K562 (cell line): ENCODE measurements at regions of chr7 and their contacts with region 1.

Region 1: DNA sequence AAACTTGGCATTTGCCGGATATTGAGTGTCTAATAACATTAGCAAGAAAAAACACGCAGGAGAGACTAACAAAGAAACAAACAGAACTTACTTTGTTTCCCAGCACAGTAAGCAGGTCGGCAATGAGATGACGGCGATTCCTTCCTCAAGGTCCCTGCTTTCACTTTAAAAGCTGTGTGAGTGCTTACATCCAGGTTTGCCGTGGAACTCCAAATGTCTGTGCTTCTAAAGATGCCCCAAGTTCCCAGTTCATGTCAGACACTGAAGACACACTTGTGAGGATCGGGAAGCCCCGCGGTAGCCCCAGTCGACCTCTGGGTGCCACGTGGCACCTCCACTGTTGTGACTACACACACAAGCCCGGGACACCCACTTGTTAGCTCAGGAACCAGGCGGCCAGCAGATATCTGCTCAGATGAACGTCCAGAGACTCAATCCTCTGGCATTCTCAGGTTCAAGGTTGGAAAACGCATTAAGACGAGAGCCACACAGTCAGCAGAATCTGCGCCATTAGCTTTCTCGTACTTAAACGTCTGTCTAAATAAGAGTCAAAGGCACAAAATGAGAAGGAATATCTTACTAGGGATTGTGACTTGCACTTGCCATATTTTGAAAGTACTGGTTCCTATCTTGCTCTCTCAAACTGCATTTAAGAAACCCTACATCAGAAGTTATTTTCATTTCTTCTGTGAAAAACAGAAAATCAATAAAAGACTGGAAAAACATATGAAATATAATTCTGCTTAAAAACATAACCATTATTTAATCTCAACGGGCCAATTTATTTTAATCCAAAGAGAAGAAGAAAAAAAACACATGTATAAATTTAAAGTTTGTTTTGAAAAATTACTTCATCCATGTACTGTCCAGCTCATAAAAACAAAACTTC is 207.6 kb upstream of the KLF14 start:
- DNase-seq: peak; percentile 73 to 88 (median 78)
- ATAC-seq: peak; percentile 88
- H3K4me3 ChIP-seq: peak overlapping the region; percentile 45
- H3K27ac ChIP-seq: peak overlapping the region; percentile 93
- H3K4me1 ChIP-seq: peaks cover 0 to 18% of the 10 kb centered on the region in 2 experiments; a peak in 4 of 5 replicates
- H3K27me3 ChIP-seq: no peaks in the 10 kb centered on the region
- CTCF ChIP-seq: no peak
- EP300 ChIP-seq: no peak
- POLR2A ChIP-seq: peak; percentile 82
- RAD21 ChIP-seq: no peak

Region 2: DNA sequence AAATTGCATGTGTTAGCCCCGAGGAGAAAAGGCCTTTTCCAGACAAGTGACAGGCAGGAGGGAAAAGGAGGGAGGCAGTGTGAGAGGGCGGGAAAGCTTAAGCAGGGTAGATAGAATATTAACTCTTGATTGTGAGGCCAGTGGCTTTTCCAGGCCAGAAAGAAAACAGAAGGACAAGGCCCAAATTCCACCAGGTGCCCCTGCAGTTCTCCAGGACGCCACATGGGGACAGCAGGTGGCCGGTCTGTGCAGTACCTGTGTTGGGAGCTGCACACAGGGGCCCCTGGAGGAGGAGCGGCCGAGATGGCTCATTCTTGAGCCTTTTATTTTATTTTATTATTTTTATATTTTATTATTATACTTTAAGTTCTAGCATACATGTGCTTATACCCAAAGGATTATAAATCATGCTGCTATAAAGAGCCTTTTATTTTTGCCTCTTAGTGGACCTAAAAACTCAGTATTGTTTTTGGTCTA is 66.3 kb before region 1 on chr7:
- CTCF ChIA-PET with region 1: no interaction called
- POLR2A ChIA-PET with region 1: no interaction called
- in situ Hi-C with region 1: no loop called
- intact Hi-C with region 1: no loop called
- DNase-seq: peak; percentile 79 to 93 (median 90)
- ATAC-seq: peak; percentile 100
- H3K4me3 ChIP-seq: no peak overlapping the region
- H3K27ac ChIP-seq: no peak overlapping the region
- H3K4me1 ChIP-seq: no peaks in the 10 kb centered on the region
- H3K27me3 ChIP-seq: no peaks in the 10 kb centered on the region
- CTCF ChIP-seq: peak; percentile 97 to 99 (median 99)
- EP300 ChIP-seq: no peak
- POLR2A ChIP-seq: no peak
- RAD21 ChIP-seq: peak; percentile 72 to 93

Region 3: GRCh38 chr7:130912862-130913631 is 28.5 kb before region 1 on chr7:
- CTCF ChIA-PET with region 1: no interaction called
- POLR2A ChIA-PET with region 1: interaction called, 5 read pairs
- in situ Hi-C with region 1: no loop called
- intact Hi-C with region 1: loop called (anchors 2 kb)
- DNase-seq: peak in 3 of 4 experiments; percentile 35 to 67 (median 55)
- ATAC-seq: peak; percentile 62
- H3K4me3 ChIP-seq: peak overlapping the region; percentile 35
- H3K27ac ChIP-seq: peak overlapping the region; percentile 76
- H3K4me1 ChIP-seq: peaks cover 17 to 64% of the 10 kb centered on the region in 2 experiments
- H3K27me3 ChIP-seq: no peaks in the 10 kb centered on the region
- CTCF ChIP-seq: no peak
- EP300 ChIP-seq: no peak
- POLR2A ChIP-seq: peak; percentile 59; the same call in 1 of the 2 replicates
- RAD21 ChIP-seq: no peak

Region 4: DNA sequence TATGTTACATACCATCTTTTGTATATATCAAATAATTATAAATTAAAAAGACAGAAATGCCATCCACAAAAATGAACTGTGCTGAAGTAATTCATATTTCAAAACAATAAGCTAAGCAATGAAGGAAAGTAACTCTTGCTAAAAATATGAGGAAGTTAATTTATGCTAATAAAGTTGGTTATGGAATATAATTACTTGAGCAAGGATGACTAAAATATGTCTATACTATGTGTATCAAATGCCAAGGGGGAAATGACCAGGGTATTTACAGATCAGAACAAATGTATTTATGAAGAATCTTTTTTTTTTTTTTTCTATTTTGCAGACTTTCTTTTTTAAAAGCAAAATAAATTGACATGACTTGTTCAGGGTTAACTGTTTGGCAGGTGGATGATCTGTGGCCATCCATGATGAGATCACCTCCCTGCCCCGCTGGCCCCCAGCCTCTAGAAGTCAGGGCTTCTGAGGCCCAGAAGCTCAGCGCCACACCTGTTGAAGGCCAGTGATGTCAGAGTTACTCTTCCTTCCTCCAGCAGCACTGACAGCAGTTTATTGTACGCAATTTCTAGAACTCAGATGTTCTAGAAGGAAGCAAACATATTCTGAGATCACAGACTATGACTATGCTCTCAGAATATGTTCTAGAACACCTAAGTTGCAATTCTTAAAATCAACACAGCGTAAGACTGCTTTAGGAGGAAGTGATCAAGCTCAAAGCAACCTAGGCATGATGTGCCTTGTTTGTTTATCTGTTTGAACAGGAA is 11.5 kb before region 1 on chr7:
- CTCF ChIA-PET with region 1: no interaction called
- POLR2A ChIA-PET with region 1: interaction called, 32 read pairs
- in situ Hi-C with region 1: no loop called
- intact Hi-C with region 1: no loop called
- DNase-seq: peak in 2 of 4 experiments; percentile 35 to 36
- ATAC-seq: peak; percentile 39
- H3K4me3 ChIP-seq: no peak overlapping the region
- H3K27ac ChIP-seq: no peak overlapping the region
- H3K4me1 ChIP-seq: peaks cover 1 to 5% of the 10 kb centered on the region in 2 experiments; a peak in 2 of 5 replicates
- H3K27me3 ChIP-seq: no peaks in the 10 kb centered on the region
- CTCF ChIP-seq: no peak
- EP300 ChIP-seq: no peak
- POLR2A ChIP-seq: no peak
- RAD21 ChIP-seq: no peak

Region 5: DNA sequence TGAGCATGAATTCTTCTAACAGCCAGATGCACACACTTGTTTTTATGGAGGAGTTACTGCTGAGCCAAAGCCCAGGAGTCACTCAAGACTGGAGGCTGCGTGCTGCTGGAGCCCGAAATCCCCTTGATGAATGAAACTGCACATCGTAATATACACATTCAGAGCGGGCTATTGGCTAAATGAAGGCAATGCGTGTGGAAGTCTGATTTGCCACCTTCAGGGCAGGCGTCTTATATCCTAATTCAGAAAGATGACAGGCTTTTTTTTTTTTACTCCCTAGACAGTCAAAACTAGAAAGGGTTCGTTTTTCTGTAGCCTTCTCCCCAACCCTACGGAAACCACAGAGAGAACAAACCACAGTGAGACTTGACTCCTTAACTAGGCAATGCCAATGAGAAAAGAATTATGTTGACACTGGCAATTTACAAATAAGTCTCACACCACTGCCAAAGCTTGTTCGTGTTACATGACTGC is 19.6 kb after region 1 on chr7:
- CTCF ChIA-PET with region 1: no interaction called
- POLR2A ChIA-PET with region 1: interaction called, 18 read pairs
- in situ Hi-C with region 1: no loop called
- intact Hi-C with region 1: loop called (anchors 2 kb)
- DNase-seq: peak in 1 of 4 experiments; percentile 35
- ATAC-seq: peak; percentile 57
- H3K4me3 ChIP-seq: no peak overlapping the region
- H3K27ac ChIP-seq: peak overlapping the region; percentile 3; the same call in 2 of the 3 replicates
- H3K4me1 ChIP-seq: peaks cover 0 to 22% of the 10 kb centered on the region in 2 experiments; a peak in 4 of 5 replicates
- H3K27me3 ChIP-seq: no peaks in the 10 kb centered on the region
- CTCF ChIP-seq: no peak
- EP300 ChIP-seq: no peak
- POLR2A ChIP-seq: no peak
- RAD21 ChIP-seq: no peak